ENCODE measurements at regions of chr17 and their contacts with region 1.

Region 1: DNA sequence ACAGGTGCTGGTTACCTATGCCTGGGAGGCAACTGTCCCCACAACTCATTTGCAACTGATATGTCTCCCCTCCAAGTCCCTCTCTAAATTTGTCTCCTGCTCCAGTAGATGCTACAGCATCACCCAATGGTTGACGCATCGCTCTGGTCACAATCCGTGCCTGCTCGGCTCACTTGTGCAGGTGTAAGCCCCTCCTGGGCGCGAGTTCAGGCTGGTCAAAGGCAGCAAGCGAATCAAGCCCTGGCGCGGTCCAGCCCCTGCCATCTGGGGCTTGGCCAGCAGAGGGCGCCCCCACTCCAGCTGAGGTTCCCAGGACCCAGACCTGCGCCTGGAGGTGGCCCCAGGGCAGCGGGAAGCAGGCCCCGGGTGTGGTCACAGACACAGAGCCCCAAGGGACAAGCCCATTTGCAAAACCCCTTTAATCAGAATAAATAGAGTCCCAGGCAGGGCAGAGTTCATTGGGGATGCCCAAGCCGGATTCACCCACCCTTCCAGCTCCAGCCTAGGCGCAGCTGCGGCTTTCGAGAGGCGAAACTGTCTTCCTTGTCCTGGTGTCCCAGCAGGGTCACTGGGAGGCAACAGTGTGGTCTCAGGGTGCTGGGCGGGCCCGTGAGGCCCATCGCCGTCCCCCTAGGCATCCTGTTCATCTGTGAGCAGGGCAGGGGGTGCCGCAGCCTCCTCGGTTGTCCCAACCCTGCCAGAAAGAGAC is 15.9 kb downstream of the TMC6 start:
- DNase-seq: peak in 1 of 2 donors; percentile 73
- ATAC-seq: peak; percentile 21 to 32
- H3K4me3 ChIP-seq: no peak overlapping the region
- H3K27ac ChIP-seq: peak overlapping the region in 1 of 4 donors; percentile 82
- H3K4me1 ChIP-seq: peaks cover 25 to 31% of the 10 kb centered on the region in 2 donors
- H3K27me3 ChIP-seq: no peaks in the 10 kb centered on the region
- CTCF ChIP-seq: peak; percentile 97 to 100 (median 99)
- POLR2A ChIP-seq: no peak

Region 2: DNA sequence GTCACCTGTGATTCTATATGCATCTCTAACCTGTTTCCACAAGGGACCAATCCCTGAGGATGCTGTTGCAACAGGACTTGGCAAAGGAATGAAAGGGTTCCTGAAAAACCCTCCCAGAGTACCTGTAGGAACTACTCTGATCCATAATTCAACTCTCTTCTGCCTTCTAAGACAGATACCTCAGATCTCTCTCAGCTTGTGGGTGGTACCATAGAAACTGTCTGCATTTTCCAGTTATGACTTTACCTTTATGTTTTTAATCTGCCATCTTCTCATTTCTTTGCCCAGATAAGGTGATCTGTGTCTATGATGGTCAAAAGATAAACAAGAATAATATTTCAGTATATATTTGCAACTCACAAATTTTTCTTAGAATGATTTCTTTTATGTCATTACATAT is 49.2 kb before region 1 on chr17:
- in situ Hi-C with region 1: no loop called
- intact Hi-C with region 1: no loop called
- DNase-seq: no peak
- ATAC-seq: no peak
- H3K4me3 ChIP-seq: no peak overlapping the region
- H3K27ac ChIP-seq: no peak overlapping the region
- H3K4me1 ChIP-seq: peaks cover 45 to 48% of the 10 kb centered on the region in 2 donors
- H3K27me3 ChIP-seq: no peaks in the 10 kb centered on the region
- CTCF ChIP-seq: no peak
- POLR2A ChIP-seq: no peak

Region 3: GRCh38 chr17:78133971-78134898 is 21.6 kb after region 1 on chr17:
- in situ Hi-C with region 1: no loop called
- intact Hi-C with region 1: loop called (anchors 2 kb)
- DNase-seq: no peak
- ATAC-seq: peak in 1 of 2 donors; percentile 31
- H3K4me3 ChIP-seq: no peak overlapping the region
- H3K27ac ChIP-seq: no peak overlapping the region
- H3K4me1 ChIP-seq: peaks cover 0 to 7% of the 10 kb centered on the region in 2 donors
- H3K27me3 ChIP-seq: peaks cover 9 to 27% (median 27%) of the 10 kb centered on the region in 3 donors
- CTCF ChIP-seq: peak in 3 of 5 experiments; percentile 31 to 49 (median 44)
- POLR2A ChIP-seq: no peak

Region 4: GRCh38 chr17:78176548-78177025 is 63.9 kb after region 1 on chr17:
- in situ Hi-C with region 1: loop called in 2 of 4 experiments (anchors 5 to 10 kb)
- intact Hi-C with region 1: loop called (anchors 1 kb)
- DNase-seq: peak in 1 of 2 donors; percentile 65
- ATAC-seq: no peak
- H3K4me3 ChIP-seq: no peak overlapping the region
- H3K27ac ChIP-seq: peak overlapping the region in 3 of 4 donors; percentile 92 to 96 (median 95)
- H3K4me1 ChIP-seq: peaks cover 58 to 72% of the 10 kb centered on the region in 2 donors
- H3K27me3 ChIP-seq: no peaks in the 10 kb centered on the region
- CTCF ChIP-seq: peak; percentile 74 to 91 (median 86)
- POLR2A ChIP-seq: no peak

Region 5: DNA sequence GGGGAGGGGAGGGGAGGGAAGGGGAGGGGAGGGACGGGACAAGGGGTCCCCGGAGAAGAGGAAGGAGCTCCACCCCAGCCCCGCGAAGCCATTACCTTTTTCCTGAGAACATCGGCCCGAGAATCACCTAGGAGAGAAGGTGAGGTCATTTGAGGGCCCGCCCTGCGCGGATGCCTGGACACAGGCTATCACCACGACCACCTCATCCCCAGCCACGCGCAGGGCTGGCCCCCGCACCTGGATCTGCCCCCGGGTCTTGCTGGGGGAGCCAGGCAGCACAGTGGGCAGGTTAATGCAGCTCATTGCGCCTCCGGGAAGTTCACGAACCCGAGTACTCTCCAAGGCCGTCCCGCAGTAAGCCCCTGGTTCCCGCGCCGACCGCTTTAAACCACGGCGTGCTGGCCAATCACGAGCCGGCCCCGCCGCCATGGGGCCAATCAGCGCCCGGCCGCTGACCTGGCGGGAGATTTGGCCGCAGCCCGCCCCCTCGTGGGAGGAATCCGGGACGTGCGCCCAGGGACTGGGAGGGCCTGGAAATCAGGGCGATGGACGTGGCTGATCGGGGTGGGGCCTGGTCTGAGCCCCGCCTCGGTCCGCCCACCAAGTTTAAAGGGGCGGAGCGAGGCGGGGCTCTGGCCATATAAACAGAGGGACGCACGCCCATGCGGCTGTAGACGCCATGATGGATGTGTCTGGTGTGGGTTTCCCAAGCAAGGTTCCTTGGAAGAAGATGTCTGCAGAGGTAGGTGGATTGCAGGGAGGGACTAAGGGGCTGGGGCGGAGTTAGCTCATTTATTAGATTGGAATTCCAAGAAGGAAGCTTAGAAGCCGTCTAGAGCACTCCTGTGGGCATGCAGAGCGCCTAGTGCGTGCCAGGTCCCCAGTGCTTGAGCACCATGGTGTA is 74.3 kb after region 1 on chr17 and contains the starts of genes AFMID and TK1:
- in situ Hi-C with region 1: loop called in 1 of 4 experiments (anchors 10 kb)
- intact Hi-C with region 1: no loop called
- DNase-seq: peak; percentile 93 to 96
- ATAC-seq: peak; percentile 94 to 97
- H3K4me3 ChIP-seq: peak within 1 kb of the TSS; percentile 51 to 71 (median 58)
- H3K27ac ChIP-seq: peak within 1 kb of the TSS; percentile 51 to 75 (median 64)
- H3K4me1 ChIP-seq: peaks cover 15 to 17% of the 10 kb centered on the region in 2 donors
- H3K27me3 ChIP-seq: no peaks in the 10 kb centered on the region
- CTCF ChIP-seq: peak; percentile 85 to 94 (median 91)
- POLR2A ChIP-seq: peak; percentile 33 to 81
- total RNA-seq, gene AFMID: 11.7 to 14.3 (median 12.1) TPM
- total RNA-seq, gene TK1: 0.22 to 2.1 (median 0.60) TPM

Region 6: DNA sequence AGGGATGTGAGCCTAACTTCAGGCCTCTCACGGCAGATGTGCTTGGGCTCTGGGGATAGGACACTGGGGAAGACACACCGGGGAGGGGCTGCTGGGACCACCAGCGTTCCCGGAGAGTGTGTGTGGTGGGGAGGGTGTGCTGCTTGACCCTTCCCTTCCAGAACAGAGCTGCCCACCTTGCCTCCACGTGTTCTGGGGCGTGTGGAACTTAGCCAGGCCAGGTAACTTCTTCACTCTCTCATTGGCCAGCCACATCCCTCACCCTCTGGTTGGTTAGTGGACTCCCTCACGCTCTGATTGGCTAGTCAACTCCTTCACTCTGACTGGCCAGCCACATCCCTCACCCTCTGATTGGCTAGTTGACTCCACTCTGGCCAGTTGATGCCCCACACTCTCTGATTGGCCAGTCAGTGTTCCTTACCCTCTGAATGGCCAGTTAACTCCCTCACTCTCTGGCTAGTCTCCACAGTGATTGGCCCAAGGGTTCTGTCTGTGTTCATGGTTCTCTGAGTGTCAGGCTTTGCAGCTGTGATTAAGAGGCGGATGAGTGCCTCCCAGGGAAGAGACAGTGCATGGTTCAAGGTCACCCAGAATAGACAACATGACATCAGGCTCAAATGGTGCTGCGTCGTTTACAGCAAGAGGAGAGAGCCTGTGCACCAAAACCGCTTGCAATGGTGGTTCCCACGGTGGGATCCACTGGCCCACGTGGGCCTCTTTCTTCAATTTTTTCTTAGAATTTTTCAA is 128.8 kb after region 1 on chr17:
- in situ Hi-C with region 1: loop called in 1 of 4 experiments (anchors 10 kb)
- intact Hi-C with region 1: no loop called
- DNase-seq: no peak
- ATAC-seq: no peak
- H3K4me3 ChIP-seq: no peak overlapping the region
- H3K27ac ChIP-seq: no peak overlapping the region
- H3K4me1 ChIP-seq: peaks cover 0 to 4% of the 10 kb centered on the region in 2 donors
- H3K27me3 ChIP-seq: no peaks in the 10 kb centered on the region
- CTCF ChIP-seq: no peak
- POLR2A ChIP-seq: no peak

Region 7: GRCh38 chr17:78250891-78251794 is 138.5 kb after region 1 on chr17:
- in situ Hi-C with region 1: loop called in 1 of 4 experiments (anchors 10 kb)
- intact Hi-C with region 1: loop called (anchors 1 kb)
- DNase-seq: peak; percentile 58 to 77
- ATAC-seq: peak; percentile 67 to 74
- H3K4me3 ChIP-seq: peak overlapping the region in 1 of 4 donors; percentile 4
- H3K27ac ChIP-seq: peak overlapping the region in 1 of 4 donors; percentile 11
- H3K4me1 ChIP-seq: peaks cover 5 to 8% of the 10 kb centered on the region in 2 donors
- H3K27me3 ChIP-seq: no peaks in the 10 kb centered on the region
- CTCF ChIP-seq: peak; percentile 97 to 100 (median 99)
- POLR2A ChIP-seq: no peak

Region 8: DNA sequence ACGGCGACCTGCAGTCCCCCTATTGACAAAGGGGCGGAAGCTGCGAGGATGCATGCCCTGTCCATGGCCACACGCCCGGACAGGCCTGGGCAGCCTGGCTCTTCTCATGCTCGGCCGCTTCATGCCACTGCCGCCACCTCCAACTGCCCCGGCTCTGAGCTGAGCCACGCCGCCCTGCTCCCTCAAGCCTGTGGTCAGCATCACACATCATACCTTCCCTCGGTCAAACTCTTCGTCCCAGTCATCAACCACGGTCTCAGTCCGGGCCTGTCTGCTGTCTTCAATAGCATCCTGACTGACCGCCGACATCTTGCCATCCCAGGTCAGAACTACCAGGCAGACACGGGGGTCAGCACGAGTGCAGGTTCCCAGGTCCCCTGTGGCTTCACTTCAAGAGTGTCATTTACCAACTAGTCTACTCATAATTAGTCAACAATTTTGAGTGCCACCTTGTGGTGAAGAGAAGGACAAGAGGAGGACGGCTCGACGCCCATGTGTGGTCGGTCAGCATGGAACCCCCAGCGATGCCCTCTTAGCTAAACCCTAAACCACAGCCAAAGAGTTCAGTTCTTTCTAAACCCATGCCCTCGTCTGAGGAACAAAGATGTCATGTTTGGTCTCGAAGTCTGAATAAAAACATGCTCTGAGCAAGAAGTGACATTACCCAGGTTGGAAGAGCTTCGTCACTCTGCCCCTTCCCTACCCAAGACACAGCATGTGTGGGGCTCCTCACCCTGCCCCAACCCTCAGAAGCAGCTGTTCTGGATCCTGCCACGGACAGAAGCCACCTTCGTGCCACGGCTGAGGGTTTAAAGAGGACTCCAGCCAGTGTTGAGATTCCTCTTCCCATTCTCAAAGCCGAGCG is 686.3 kb after region 1 on chr17:
- in situ Hi-C with region 1: no loop called
- intact Hi-C with region 1: no loop called
- DNase-seq: no peak
- ATAC-seq: peak; percentile 46 to 72
- H3K4me3 ChIP-seq: no peak overlapping the region
- H3K27ac ChIP-seq: peak overlapping the region in 3 of 4 donors; percentile 17 to 39 (median 32)
- H3K4me1 ChIP-seq: peaks cover 28 to 32% of the 10 kb centered on the region in 2 donors
- H3K27me3 ChIP-seq: no peaks in the 10 kb centered on the region
- CTCF ChIP-seq: peak; percentile 41 to 67 (median 61)
- POLR2A ChIP-seq: no peak

Measured in gastrocnemius medialis (tissue), 4 donors.